ENCODE measurements at regions of chr6 and their contacts with region 1.

Region 1: GRCh38 chr6:41850861-41851260 is 44.3 kb downstream of the USP49 start:
- DNase-seq: no peak

Region 2: GRCh38 chr6:40860859-40861258 is 990.0 kb before region 1 on chr6:
- intact Hi-C with region 1: loop called in 1 of 2 experiments (anchors 10 kb)
- DNase-seq: no peak

Region 3: DNA sequence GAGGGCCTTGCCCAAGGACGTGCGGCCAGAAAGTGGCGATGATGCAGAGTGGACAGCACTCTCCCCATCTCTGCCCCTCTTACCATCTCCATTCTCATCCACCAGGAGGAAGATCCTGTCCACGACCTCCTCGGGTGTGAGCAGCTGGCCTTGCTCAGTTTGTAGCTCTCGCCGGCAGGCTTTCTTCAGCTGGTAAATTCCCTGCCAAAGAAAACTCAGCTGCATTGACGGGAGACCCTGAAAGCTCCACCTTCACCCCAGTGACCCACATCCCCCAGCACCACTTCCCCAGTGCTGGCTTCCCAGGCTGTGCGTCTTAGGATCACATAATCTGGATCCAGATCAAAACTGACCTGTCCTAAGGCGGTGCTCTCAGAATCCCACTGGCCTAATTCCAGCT is 334.7 kb after region 1 on chr6:
- intact Hi-C with region 1: no loop called
- DNase-seq: no peak

Measured in posterior vena cava (tissue), 2 donors.